Mammary epithelial cell (primary cell): ENCODE measurements at regions of chr10 and their contacts with region 1.

Region 1: GRCh38 chr10:17175551-17175950 is 25.9 kb downstream of the TRDMT1 start:
- DNase-seq: no peak
- H3K4me3 ChIP-seq: no peak overlapping the region
- H3K27ac ChIP-seq: no peak overlapping the region
- H3K4me1 ChIP-seq: no peaks in the 10 kb centered on the region
- H3K27me3 ChIP-seq: no peaks in the 10 kb centered on the region
- CTCF ChIP-seq: no peak

Region 2: GRCh38 chr10:16843252-16843870 is 332.2 kb before region 1 on chr10:
- CTCF ChIA-PET with region 1: no interaction called
- dilution Hi-C with region 1: no loop called
- in situ Hi-C with region 1: loop called (anchors 5 to 10 kb)
- intact Hi-C with region 1: loop called (anchors 1 kb)
- DNase-seq: peak; percentile 61
- H3K4me3 ChIP-seq: no peak overlapping the region
- H3K27ac ChIP-seq: no peak overlapping the region
- H3K4me1 ChIP-seq: peaks cover 2% of the 10 kb centered on the region
- H3K27me3 ChIP-seq: no peaks in the 10 kb centered on the region
- CTCF ChIP-seq: peak; percentile 38 to 43

Region 3: DNA sequence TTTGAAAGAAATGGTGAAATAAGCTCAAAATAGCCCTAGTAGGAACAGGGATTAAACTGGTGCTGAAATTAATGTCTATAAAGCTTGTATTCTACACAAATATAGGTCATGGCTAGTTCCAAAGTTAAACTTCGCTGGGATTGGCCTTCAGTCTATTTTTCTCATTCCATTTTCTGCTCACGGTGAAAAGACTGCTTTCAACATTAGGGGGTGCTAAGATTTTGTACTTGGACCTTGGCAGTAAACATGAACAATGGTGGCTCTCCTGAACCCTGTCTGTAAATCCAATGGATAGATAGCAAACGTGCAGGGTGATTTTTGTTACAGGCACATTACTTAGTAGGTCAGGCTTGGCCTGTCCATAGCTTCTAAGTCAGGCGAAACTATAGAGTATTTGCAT is 322.4 kb before region 1 on chr10:
- CTCF ChIA-PET with region 1: no interaction called
- dilution Hi-C with region 1: no loop called
- in situ Hi-C with region 1: loop called (anchors 5 to 10 kb)
- intact Hi-C with region 1: no loop called
- DNase-seq: no peak
- H3K4me3 ChIP-seq: no peak overlapping the region
- H3K27ac ChIP-seq: no peak overlapping the region
- H3K4me1 ChIP-seq: peaks cover 18% of the 10 kb centered on the region
- H3K27me3 ChIP-seq: no peaks in the 10 kb centered on the region
- CTCF ChIP-seq: peak in 1 of 2 donors; percentile 21

Region 4: DNA sequence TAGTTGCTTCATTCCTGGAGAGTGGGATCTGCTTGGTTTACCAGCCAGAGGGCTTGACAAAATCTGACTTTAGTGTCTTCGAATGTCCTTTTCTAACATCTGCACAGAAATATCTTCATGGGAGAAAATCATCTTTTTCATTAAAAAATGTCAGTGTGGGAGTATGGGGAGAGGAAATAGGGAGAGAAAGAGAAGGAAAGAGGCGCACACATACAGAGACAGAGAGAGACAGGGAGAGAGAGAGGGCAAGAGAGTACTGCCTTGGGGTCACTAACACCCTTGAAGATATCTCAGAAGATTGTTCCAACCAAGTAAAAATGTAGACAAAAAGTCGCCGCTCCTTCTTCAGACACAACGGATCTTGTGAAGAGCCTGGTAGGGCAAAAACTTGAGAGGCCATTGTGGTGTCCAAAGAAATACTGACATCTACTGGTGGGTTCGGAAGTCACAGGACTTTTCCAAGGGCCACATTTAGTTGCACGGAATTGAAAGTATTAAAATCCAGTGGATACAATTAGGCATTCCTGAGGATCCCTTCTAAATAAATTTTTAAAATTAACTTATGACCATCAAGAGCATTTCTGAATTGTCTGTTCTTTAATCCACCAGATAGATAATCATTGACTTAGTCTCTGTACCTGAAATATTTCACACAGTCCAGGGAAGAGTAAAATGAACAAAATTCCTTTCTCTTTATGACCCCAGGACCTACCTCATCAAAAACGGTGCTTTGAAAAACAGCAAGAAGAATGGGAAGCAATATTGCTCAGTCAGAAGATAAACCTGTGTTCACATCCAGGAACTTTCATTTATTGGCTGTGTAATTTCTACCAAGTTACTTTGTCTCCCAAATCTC is 82.1 kb after region 1 on chr10:
- CTCF ChIA-PET with region 1: no interaction called
- dilution Hi-C with region 1: no loop called
- in situ Hi-C with region 1: no loop called
- intact Hi-C with region 1: loop called (anchors 1 kb)
- DNase-seq: peak; percentile 58
- H3K4me3 ChIP-seq: no peak overlapping the region
- H3K27ac ChIP-seq: no peak overlapping the region
- H3K4me1 ChIP-seq: no peaks in the 10 kb centered on the region
- H3K27me3 ChIP-seq: no peaks in the 10 kb centered on the region
- CTCF ChIP-seq: peak; percentile 83 to 86